IMR-90 (cell line): ENCODE measurements at regions of chr2 and their contacts with region 1.

Region 1: GRCh38 chr2:44044281-44044720 is 48.5 kb upstream of the LRPPRC start:
- DNase-seq: peak; percentile 74
- ATAC-seq: peak; percentile 100
- H3K4me3 ChIP-seq: no peak overlapping the region
- H3K27ac ChIP-seq: no peak overlapping the region
- H3K4me1 ChIP-seq: 0 out of 2 replicates have a peak, but pooled peaks cover 1% of the 10 kb centered on the region
- H3K27me3 ChIP-seq: peaks cover 25% of the 10 kb centered on the region
- CTCF ChIP-seq: peak; percentile 96
- POLR2A ChIP-seq: no peak
- RAD21 ChIP-seq: peak; percentile 93

Region 2: GRCh38 chr2:43877782-43878464 is 166.4 kb before region 1 on chr2:
- CTCF ChIA-PET with region 1: no interaction called
- POLR2A ChIA-PET with region 1: no interaction called
- dilution Hi-C with region 1: no loop called
- in situ Hi-C with region 1: no loop called
- intact Hi-C with region 1: loop called (anchors 1 kb)
- DNase-seq: peak; percentile 56
- ATAC-seq: peak; percentile 88
- H3K4me3 ChIP-seq: no peak overlapping the region
- H3K27ac ChIP-seq: no peak overlapping the region
- H3K4me1 ChIP-seq: peaks cover 4% of the 10 kb centered on the region
- H3K27me3 ChIP-seq: peaks cover 24% of the 10 kb centered on the region
- CTCF ChIP-seq: peak; percentile 93
- POLR2A ChIP-seq: no peak
- RAD21 ChIP-seq: peak; percentile 85

Region 3: GRCh38 chr2:44055229-44055628 is 10.9 kb after region 1 on chr2:
- CTCF ChIA-PET with region 1: interaction called, 11 read pairs
- POLR2A ChIA-PET with region 1: no interaction called
- dilution Hi-C with region 1: no loop called
- in situ Hi-C with region 1: no loop called
- intact Hi-C with region 1: no loop called
- DNase-seq: no peak
- ATAC-seq: no peak
- H3K4me3 ChIP-seq: no peak overlapping the region
- H3K27ac ChIP-seq: no peak overlapping the region
- H3K4me1 ChIP-seq: no peaks in the 10 kb centered on the region
- H3K27me3 ChIP-seq: peaks cover 20% of the 10 kb centered on the region
- CTCF ChIP-seq: no peak
- POLR2A ChIP-seq: no peak
- RAD21 ChIP-seq: no peak

Region 4: GRCh38 chr2:44291281-44292248 is 247.3 kb after region 1 on chr2:
- CTCF ChIA-PET with region 1: no interaction called
- POLR2A ChIA-PET with region 1: no interaction called
- dilution Hi-C with region 1: no loop called
- in situ Hi-C with region 1: no loop called
- intact Hi-C with region 1: loop called (anchors 1 kb)
- DNase-seq: peak; percentile 75
- ATAC-seq: peak; percentile 95
- H3K4me3 ChIP-seq: no peak overlapping the region
- H3K27ac ChIP-seq: no peak overlapping the region
- H3K4me1 ChIP-seq: peaks cover 7% of the 10 kb centered on the region
- H3K27me3 ChIP-seq: peaks cover 20% of the 10 kb centered on the region
- CTCF ChIP-seq: peak; percentile 74
- POLR2A ChIP-seq: no peak
- RAD21 ChIP-seq: peak; percentile 79

Region 5: DNA sequence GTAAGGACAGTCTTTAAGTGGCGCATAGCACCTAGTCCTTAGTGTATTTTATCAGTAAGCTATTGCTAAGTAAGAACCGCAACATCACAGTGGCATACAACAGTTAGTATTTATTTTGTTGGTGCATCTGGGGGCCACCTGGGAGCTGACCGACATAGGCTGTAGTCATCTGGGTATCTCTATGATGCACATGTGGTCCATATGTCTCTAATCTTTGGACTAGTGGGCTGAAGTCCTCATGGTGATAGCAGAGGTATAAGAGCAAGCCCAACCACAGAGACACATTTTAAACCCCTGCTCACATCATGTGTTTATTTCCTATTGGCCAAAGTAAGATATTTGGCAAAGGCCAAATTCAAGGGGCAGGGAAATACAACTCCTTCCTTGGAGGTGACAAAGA is 320.3 kb after region 1 on chr2:
- CTCF ChIA-PET with region 1: no interaction called
- POLR2A ChIA-PET with region 1: no interaction called
- dilution Hi-C with region 1: no loop called
- in situ Hi-C with region 1: no loop called
- intact Hi-C with region 1: no loop called
- DNase-seq: no peak
- ATAC-seq: no peak
- H3K4me3 ChIP-seq: no peak overlapping the region
- H3K27ac ChIP-seq: no peak overlapping the region
- H3K4me1 ChIP-seq: no peaks in the 10 kb centered on the region
- H3K27me3 ChIP-seq: no peaks in the 10 kb centered on the region
- CTCF ChIP-seq: no peak
- POLR2A ChIP-seq: no peak
- RAD21 ChIP-seq: no peak

Region 6: GRCh38 chr2:44392338-44392943 is 348.1 kb after region 1 on chr2:
- CTCF ChIA-PET with region 1: interaction called, 3 read pairs
- POLR2A ChIA-PET with region 1: no interaction called
- dilution Hi-C with region 1: no loop called
- in situ Hi-C with region 1: no loop called
- intact Hi-C with region 1: loop called (anchors 2 kb)
- DNase-seq: peak; percentile 21
- ATAC-seq: peak; percentile 37; the same call in 1 of the 2 replicates
- H3K4me3 ChIP-seq: no peak overlapping the region
- H3K27ac ChIP-seq: no peak overlapping the region
- H3K4me1 ChIP-seq: no peaks in the 10 kb centered on the region
- H3K27me3 ChIP-seq: no peaks in the 10 kb centered on the region
- CTCF ChIP-seq: peak; percentile 65
- POLR2A ChIP-seq: no peak
- RAD21 ChIP-seq: peak; percentile 55

Region 7: GRCh38 chr2:44955593-44956392 is 911.5 kb after region 1 on chr2:
- CTCF ChIA-PET with region 1: interaction called, 3 read pairs
- POLR2A ChIA-PET with region 1: no interaction called
- dilution Hi-C with region 1: no loop called
- in situ Hi-C with region 1: loop called (anchors 10 kb)
- intact Hi-C with region 1: loop called (anchors 1 kb)
- DNase-seq: peak; percentile 56
- ATAC-seq: peak; percentile 78
- H3K4me3 ChIP-seq: no peak overlapping the region
- H3K27ac ChIP-seq: no peak overlapping the region
- H3K4me1 ChIP-seq: no peaks in the 10 kb centered on the region
- H3K27me3 ChIP-seq: peaks cover 52% of the 10 kb centered on the region
- CTCF ChIP-seq: peak; percentile 94
- POLR2A ChIP-seq: no peak
- RAD21 ChIP-seq: peak; percentile 89

Region 8: DNA sequence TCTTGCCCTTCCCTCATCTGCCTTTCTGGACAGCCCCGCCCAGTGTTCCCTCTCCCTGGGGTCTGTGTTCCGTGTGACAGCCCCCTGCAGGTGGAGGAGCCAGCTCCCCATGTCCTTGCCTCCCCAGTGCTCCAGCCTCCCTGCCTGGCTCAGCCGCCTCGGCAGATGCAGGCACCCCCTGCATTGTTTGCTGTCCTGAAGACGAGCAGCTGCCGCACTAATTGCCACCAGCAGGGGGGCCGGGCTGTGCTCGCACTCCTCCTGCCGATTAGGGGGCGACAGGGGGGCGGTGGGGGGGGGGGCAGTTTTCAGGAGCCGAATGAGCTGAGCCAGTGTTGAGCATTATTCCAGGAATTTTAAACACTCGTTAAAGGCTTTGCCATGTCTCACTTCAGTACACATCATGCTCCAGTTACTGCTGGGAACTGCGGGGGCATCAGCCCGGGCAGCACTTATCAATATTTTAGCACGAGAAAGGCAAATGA is 920.5 kb after region 1 on chr2:
- CTCF ChIA-PET with region 1: no interaction called
- POLR2A ChIA-PET with region 1: no interaction called
- dilution Hi-C with region 1: no loop called
- in situ Hi-C with region 1: loop called (anchors 10 kb)
- intact Hi-C with region 1: no loop called
- DNase-seq: no peak
- ATAC-seq: no peak
- H3K4me3 ChIP-seq: no peak overlapping the region
- H3K27ac ChIP-seq: no peak overlapping the region
- H3K4me1 ChIP-seq: no peaks in the 10 kb centered on the region
- H3K27me3 ChIP-seq: peaks cover 44% of the 10 kb centered on the region
- CTCF ChIP-seq: 0 out of 2 replicates have a peak, but pooled peaks have one; percentile 6
- POLR2A ChIP-seq: no peak
- RAD21 ChIP-seq: no peak